ENCODE measurements at regions of chr13 and their contacts with region 1.

Region 1: DNA sequence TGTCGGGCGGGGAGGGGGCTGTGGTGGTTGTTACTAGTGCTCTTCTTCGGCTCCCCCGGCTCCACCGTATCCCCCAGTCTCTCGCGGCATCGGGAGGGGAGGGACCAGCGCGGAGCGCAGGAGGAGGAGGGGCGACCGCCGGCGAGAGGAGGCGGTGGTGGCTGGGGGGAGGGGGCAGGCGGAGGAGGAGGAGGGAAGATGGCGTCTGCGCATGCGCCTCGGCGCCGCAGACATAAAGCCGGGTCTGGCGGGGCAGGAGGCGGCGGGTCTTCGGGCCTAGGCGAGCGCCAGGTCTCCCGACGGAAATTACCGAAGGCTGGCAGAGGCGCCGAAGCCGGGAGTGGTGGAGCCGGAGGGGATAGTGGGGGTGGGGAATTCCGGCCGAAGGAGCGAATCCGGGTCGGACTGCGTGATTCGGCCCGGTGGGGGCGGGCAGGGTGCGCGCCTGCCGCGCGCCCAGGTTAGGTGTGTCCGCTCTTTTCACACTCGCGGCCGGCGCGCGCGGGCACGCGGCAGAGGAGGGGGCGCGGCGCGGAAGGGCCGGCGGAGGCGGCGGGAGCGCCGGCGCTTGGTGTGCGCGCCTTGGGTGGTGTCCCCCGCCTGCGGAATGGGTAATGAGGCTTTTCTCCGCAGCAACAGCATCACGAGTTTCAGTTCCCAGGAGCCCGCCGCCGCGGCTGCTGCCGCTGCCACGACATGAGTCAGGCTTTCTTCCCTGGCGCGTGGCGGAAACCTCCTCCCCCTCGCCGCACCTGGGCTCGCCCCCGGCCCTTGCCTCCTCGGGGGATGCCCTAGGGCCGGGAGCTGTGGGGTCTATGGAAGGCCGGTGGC is 1.3 kb upstream of the TSC22D1 start:
- DNase-seq: peak; percentile 92 to 98 (median 96)
- ATAC-seq: peak; percentile 76
- H3K4me3 ChIP-seq: peak overlapping the region; percentile 78 to 87
- H3K4me3 Mint-ChIP-seq: peak overlapping the region; percentile 95
- H3K27ac ChIP-seq: peak overlapping the region; percentile 78 to 92
- H3K27ac Mint-ChIP-seq: peak overlapping the region; percentile 95
- H3K4me1 ChIP-seq: peaks cover 35% of the 10 kb centered on the region
- H3K4me1 Mint-ChIP-seq: peaks cover 36% of the 10 kb centered on the region
- H3K27me3 ChIP-seq: no peaks in the 10 kb centered on the region
- H3K27me3 Mint-ChIP-seq: no peaks in the 10 kb centered on the region
- CTCF ChIP-seq: no peak

Region 2: GRCh38 chr13:42991892-42992763 is 1585.3 kb before region 1 on chr13 and contains the start of gene EPSTI1:
- CTCF ChIA-PET with region 1: no interaction called
- POLR2A ChIA-PET with region 1: no interaction called
- intact Hi-C with region 1: loop called (anchors 5 to 10 kb)
- DNase-seq: peak; percentile 41 to 89 (median 74)
- ATAC-seq: peak; percentile 83
- H3K4me3 ChIP-seq: peak within 1 kb of the TSS; percentile 74 to 78
- H3K4me3 Mint-ChIP-seq: peak within 1 kb of the TSS; percentile 93
- H3K27ac ChIP-seq: peak within 1 kb of the TSS; percentile 96 to 97
- H3K27ac Mint-ChIP-seq: peak within 1 kb of the TSS; percentile 99
- H3K4me1 ChIP-seq: peaks cover 27% of the 10 kb centered on the region
- H3K4me1 Mint-ChIP-seq: peaks cover 34% of the 10 kb centered on the region
- H3K27me3 ChIP-seq: no peaks in the 10 kb centered on the region
- H3K27me3 Mint-ChIP-seq: no peaks in the 10 kb centered on the region
- CTCF ChIP-seq: no peak
- total RNA-seq, gene EPSTI1: 8.8 to 9.7 TPM

Region 3: GRCh38 chr13:43905435-43906031 is 671.9 kb before region 1 on chr13:
- CTCF ChIA-PET with region 1: no interaction called
- POLR2A ChIA-PET with region 1: no interaction called
- intact Hi-C with region 1: loop called in 1 of 2 experiments (anchors 5 kb)
- DNase-seq: peak in 4 of 9 experiments; percentile 15 to 74 (median 42)
- ATAC-seq: peak; percentile 79
- H3K4me3 ChIP-seq: no peak overlapping the region
- H3K4me3 Mint-ChIP-seq: no peak overlapping the region
- H3K27ac ChIP-seq: no peak overlapping the region
- H3K27ac Mint-ChIP-seq: no peak overlapping the region
- H3K4me1 ChIP-seq: no peaks in the 10 kb centered on the region
- H3K4me1 Mint-ChIP-seq: no peaks in the 10 kb centered on the region
- H3K27me3 ChIP-seq: no peaks in the 10 kb centered on the region
- H3K27me3 Mint-ChIP-seq: peaks cover 14% of the 10 kb centered on the region
- CTCF ChIP-seq: peak; percentile 82

Region 4: DNA sequence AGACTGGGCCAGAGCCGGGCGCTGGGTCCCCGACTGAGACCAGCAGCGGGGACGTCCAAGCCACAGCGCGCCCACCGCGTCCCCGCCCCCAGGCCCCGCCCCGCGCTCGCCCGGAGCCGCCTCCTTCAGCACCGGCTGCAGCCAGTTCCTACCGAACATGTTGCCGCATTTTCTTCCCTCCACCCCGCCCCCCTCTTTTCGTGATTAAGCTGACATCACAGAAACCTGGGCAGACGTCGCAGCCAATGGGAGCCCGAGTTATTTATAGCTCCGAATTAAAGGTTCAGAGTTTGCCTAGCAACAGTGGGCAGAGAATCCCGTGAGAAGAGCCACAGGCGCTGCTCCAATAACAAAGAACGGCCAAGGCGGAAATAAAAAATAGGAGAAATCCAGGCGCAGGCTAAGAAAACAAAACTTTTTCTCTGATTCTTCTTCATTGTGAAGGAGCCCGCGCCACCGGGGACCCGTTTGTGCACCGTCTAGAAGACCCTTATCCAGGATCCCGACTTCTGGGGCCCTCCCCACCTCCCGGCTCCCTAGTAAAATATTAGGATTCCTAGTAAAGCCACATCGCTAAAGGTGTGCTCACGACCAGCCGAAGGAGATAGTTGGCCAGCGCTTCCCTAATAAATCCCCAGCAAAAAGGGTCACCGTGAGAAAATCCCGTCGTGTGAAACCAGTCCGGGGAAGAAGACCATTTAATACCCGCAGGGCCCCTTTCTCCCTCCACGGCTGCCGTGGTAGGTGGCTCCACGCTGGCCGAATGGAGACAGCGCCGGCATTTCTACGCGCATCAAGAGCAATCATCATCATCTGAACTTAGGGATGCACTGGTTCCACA is 142.1 kb before region 1 on chr13:
- CTCF ChIA-PET with region 1: no interaction called
- POLR2A ChIA-PET with region 1: no interaction called
- intact Hi-C with region 1: loop called (anchors 5 kb)
- DNase-seq: peak; percentile 79 to 96 (median 87)
- ATAC-seq: peak; percentile 84
- H3K4me3 ChIP-seq: peak overlapping the region; percentile 57 to 58
- H3K4me3 Mint-ChIP-seq: peak overlapping the region; percentile 89
- H3K27ac ChIP-seq: peak overlapping the region; percentile 49 to 70
- H3K27ac Mint-ChIP-seq: peak overlapping the region; percentile 81
- H3K4me1 ChIP-seq: peaks cover 24% of the 10 kb centered on the region
- H3K4me1 Mint-ChIP-seq: peaks cover 29% of the 10 kb centered on the region
- H3K27me3 ChIP-seq: no peaks in the 10 kb centered on the region
- H3K27me3 Mint-ChIP-seq: peaks cover 5% of the 10 kb centered on the region
- CTCF ChIP-seq: no peak

Region 5: DNA sequence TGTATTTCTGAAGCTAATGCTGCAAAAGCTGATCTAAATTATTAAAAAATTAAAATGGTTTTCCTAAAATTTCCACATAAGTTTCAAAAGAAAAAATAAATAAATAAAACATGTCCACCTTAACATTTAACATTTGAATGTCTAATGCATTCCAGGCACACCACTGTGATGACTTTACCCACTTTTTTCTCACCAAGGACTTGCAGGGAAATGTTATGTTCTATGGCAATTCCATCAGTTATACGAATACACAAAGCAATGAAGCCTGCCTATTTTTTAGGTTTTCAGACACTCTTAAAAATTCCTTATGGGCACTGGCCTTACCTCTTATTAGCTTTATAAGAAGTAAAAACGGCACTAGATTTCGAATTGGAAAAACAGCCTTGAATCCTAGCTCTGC is 11.6 kb before region 1 on chr13:
- CTCF ChIA-PET with region 1: interaction called, 3 read pairs
- POLR2A ChIA-PET with region 1: no interaction called
- intact Hi-C with region 1: loop called in 1 of 2 experiments (anchors 1 kb)
- DNase-seq: no peak
- ATAC-seq: no peak
- H3K4me3 ChIP-seq: no peak overlapping the region
- H3K4me3 Mint-ChIP-seq: no peak overlapping the region
- H3K27ac ChIP-seq: no peak overlapping the region
- H3K27ac Mint-ChIP-seq: no peak overlapping the region
- H3K4me1 ChIP-seq: peaks cover 3% of the 10 kb centered on the region
- H3K4me1 Mint-ChIP-seq: peaks cover 55% of the 10 kb centered on the region
- H3K27me3 ChIP-seq: no peaks in the 10 kb centered on the region
- H3K27me3 Mint-ChIP-seq: no peaks in the 10 kb centered on the region
- CTCF ChIP-seq: no peak

Region 6: GRCh38 chr13:44815623-44816022 is 238.2 kb after region 1 on chr13:
- CTCF ChIA-PET with region 1: no interaction called
- POLR2A ChIA-PET with region 1: no interaction called
- intact Hi-C with region 1: no loop called
- DNase-seq: no peak
- ATAC-seq: no peak
- H3K4me3 ChIP-seq: no peak overlapping the region
- H3K4me3 Mint-ChIP-seq: no peak overlapping the region
- H3K27ac ChIP-seq: no peak overlapping the region
- H3K27ac Mint-ChIP-seq: no peak overlapping the region
- H3K4me1 ChIP-seq: no peaks in the 10 kb centered on the region
- H3K4me1 Mint-ChIP-seq: no peaks in the 10 kb centered on the region
- H3K27me3 ChIP-seq: peaks cover 0 to 2% of the 10 kb centered on the region in 2 experiments
- H3K27me3 Mint-ChIP-seq: peaks cover 3% of the 10 kb centered on the region
- CTCF ChIP-seq: no peak

Region 7: GRCh38 chr13:45119991-45120864 is 542.8 kb after region 1 on chr13 and contains the start of gene GTF2F2:
- CTCF ChIA-PET with region 1: no interaction called
- POLR2A ChIA-PET with region 1: no interaction called
- intact Hi-C with region 1: loop called in 1 of 2 experiments (anchors 10 kb)
- DNase-seq: peak; percentile 73 to 94 (median 88)
- ATAC-seq: peak; percentile 65
- H3K4me3 ChIP-seq: peak within 1 kb of the TSS; percentile 70 to 93
- H3K4me3 Mint-ChIP-seq: no peak within 1 kb of the TSS
- H3K27ac ChIP-seq: peak within 1 kb of the TSS; percentile 93 to 97
- H3K27ac Mint-ChIP-seq: no peak within 1 kb of the TSS
- H3K4me1 ChIP-seq: peaks cover 22% of the 10 kb centered on the region
- H3K4me1 Mint-ChIP-seq: peaks cover 20% of the 10 kb centered on the region
- H3K27me3 ChIP-seq: no peaks in the 10 kb centered on the region
- H3K27me3 Mint-ChIP-seq: no peaks in the 10 kb centered on the region
- CTCF ChIP-seq: no peak
- total RNA-seq, gene GTF2F2: 13.2 to 14.8 TPM

Region 8: DNA sequence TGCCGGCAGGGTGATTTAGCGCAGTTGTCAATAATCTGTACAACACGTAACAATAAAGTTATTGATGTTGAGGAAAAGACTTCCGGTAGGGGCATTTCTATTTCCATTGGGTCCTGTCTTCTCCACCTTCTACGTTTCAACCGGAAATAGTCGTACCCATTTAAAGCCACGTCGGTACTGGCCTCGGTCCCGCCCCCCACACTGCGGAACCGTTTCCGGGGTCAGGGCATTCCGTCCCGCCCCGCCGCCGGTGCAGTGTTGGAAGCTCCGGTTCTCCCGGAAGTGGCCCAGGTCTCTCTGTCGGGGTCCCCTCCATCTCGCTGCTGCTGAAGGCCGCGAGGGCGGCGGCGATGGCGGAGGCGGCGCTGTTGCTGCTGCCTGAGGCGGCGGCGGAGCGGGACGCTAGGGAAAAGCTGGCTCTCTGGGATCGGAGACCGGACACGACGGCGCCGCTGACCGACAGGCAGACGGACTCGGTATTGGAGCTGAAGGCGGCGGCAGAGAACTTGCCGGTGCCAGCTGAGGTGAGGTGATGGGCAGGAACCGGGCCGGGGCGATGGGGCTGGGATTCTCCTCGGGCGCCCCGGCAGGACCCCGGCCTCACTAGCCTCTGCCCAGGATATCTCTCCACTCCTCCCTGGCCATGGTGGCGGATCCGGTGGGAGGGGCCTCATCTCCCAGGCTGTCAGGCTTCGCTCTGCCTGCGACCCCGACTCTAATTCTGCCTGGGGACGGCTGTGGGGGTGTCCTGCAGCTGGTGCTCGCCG is 887.4 kb after region 1 on chr13 and contains the start of gene COG3:
- CTCF ChIA-PET with region 1: no interaction called
- POLR2A ChIA-PET with region 1: no interaction called
- intact Hi-C with region 1: loop called in 1 of 2 experiments (anchors 10 kb)
- DNase-seq: peak; percentile 86 to 98 (median 94)
- ATAC-seq: peak; percentile 94
- H3K4me3 ChIP-seq: peak within 1 kb of the TSS; percentile 77 to 85
- H3K4me3 Mint-ChIP-seq: peak within 1 kb of the TSS; percentile 92
- H3K27ac ChIP-seq: peak within 1 kb of the TSS; percentile 82 to 95
- H3K27ac Mint-ChIP-seq: peak within 1 kb of the TSS; percentile 91
- H3K4me1 ChIP-seq: peaks cover 38% of the 10 kb centered on the region
- H3K4me1 Mint-ChIP-seq: peaks cover 49% of the 10 kb centered on the region
- H3K27me3 ChIP-seq: no peaks in the 10 kb centered on the region
- H3K27me3 Mint-ChIP-seq: no peaks in the 10 kb centered on the region
- CTCF ChIP-seq: peak; percentile 6
- total RNA-seq, gene COG3: 45.9 to 47.6 TPM

Measured in CD8-positive, alpha-beta T cell (primary cell).